A549 (cell line): ENCODE measurements at regions of chr17 and their contacts with region 1.

Region 1: GRCh38 chr17:17959520-17960361 is 12.5 kb downstream of the TOM1L2 start:
- DNase-seq: peak; percentile 33 to 56
- ATAC-seq: peak; percentile 9 to 21; a peak in 4 of 6 replicates
- H3K4me3 ChIP-seq: peak overlapping the region; percentile 20; the same call in 2 of the 3 replicates
- H3K27ac ChIP-seq: peak overlapping the region; percentile 74 to 83
- H3K4me1 ChIP-seq: peaks cover 39% of the 10 kb centered on the region
- CTCF ChIP-seq: no peak
- EP300 ChIP-seq: no peak
- POLR2A ChIP-seq: no peak
- RAD21 ChIP-seq: 0 out of 5 replicates have a peak, but pooled peaks of 1 of the 2 experiments have one; percentile 1

Region 2: DNA sequence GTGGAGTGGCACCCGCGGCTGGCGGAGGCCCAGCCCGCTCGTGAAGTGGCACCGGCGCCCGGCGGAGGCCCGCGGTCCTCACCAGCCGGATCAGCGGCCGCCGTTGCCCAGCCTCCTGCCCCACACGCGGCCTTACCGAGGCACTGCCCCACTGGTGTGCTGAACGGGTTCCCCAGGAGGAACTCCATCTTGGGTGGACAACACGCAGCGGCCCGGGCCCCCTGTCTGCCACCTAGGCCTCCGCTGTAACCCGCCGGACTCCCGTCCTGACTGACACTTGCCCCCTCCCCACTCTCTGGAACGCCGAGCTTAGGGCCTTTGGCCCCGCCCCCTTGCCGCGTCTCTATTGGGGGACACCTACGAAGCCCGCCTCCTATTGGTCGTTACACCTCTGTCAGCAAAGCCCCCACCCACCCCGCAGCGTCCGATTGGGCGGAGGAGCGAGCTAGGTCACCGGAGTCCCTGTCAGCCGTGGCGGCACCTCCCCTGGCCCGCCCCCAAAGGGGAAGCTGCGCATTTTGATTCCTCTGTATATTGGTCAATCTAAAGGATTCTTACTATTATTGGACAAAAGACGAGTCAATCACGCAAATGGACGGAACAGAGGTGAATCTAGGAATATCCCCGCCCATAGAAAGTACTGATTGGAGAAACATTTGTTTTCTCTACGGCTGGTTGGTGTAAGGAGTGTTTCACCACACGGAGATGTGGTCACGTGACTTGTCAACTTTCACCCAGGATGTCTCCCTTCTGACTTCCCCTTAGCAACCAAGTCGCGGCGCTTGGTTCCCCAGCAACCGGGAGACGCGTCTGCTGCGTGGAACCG is 12.6 kb after region 1 on chr17 and contains the starts of genes DRC3 and TOM1L2:
- CTCF ChIA-PET with region 1: interaction called, 51 read pairs
- POLR2A ChIA-PET with region 1: interaction called, 20 read pairs
- DNase-seq: peak; percentile 100
- ATAC-seq: peak; percentile 93 to 96
- H3K4me3 ChIP-seq: peak within 1 kb of the TSS; percentile 69
- H3K27ac ChIP-seq: peak within 1 kb of the TSS; percentile 68 to 88
- H3K4me1 ChIP-seq: peaks cover 25% of the 10 kb centered on the region
- CTCF ChIP-seq: no peak
- EP300 ChIP-seq: no peak
- POLR2A ChIP-seq: peak; percentile 57
- RAD21 ChIP-seq: no peak
- polyA plus RNA-seq, gene DRC3: 2.9 and 3.1 TPM in 2 replicates
- polyA plus RNA-seq, gene TOM1L2: 19.0 and 19.2 TPM in 2 replicates